Activated naive CD4-positive, alpha-beta T cell treated with anti-CD3 and anti-CD28 coated beads for 36 hours (primary cell): ENCODE measurements at regions of chr1 and their contacts with region 1.

Region 1: DNA sequence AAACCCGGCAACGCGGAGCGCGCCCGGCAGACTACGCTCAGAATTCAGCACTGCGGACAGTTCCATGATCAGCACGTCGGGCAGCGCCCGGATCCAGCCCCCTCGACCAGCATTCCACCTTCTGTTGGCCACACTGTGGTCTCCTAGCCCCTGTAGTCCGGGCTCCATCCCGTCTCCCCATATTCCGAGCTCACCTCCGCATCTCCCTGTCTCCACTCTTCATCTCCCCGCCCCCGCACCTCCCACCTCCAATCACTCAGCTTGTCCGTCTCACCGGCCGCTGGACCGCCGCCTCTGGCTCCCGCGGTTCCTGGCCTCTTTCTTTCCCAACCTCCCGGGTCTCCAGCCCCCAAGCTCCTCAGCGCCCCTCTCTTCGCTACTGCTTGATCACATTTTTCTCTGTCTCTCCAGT is 500 bp downstream of the EPHA10 start:
- DNase-seq: peak; percentile 71
- H3K4me3 Mint-ChIP-seq: no peak overlapping the region
- H3K27ac Mint-ChIP-seq: no peak overlapping the region
- H3K4me1 Mint-ChIP-seq: peaks cover 23% of the 10 kb centered on the region
- H3K27me3 Mint-ChIP-seq: peaks cover 64% of the 10 kb centered on the region

Region 2: GRCh38 chr1:37793773-37794371 is 29.5 kb after region 1 on chr1 and contains the start of gene MANEAL:
- CTCF ChIA-PET with region 1: no interaction called
- intact Hi-C with region 1: loop called (anchors 2 kb)
- DNase-seq: peak; percentile 17
- H3K4me3 Mint-ChIP-seq: peak within 1 kb of the TSS; percentile 64
- H3K27ac Mint-ChIP-seq: no peak within 1 kb of the TSS
- H3K4me1 Mint-ChIP-seq: peaks cover 11% of the 10 kb centered on the region
- H3K27me3 Mint-ChIP-seq: peaks cover 35% of the 10 kb centered on the region
- total RNA-seq, gene MANEAL: 0.69 to 0.74 TPM